Activated CD4-positive, alpha-beta T cell treated with anti-CD3 and anti-CD28 coated beads for 36 hours (primary cell): ENCODE measurements at regions of chr1 and their contacts with region 1.

Region 1: GRCh38 chr1:207389740-207390464 is 64.2 kb upstream of the CR2 start:
- DNase-seq: peak; percentile 29
- ATAC-seq: peak; percentile 98
- H3K4me3 Mint-ChIP-seq: no peak overlapping the region
- H3K27ac Mint-ChIP-seq: peak overlapping the region; percentile 83
- H3K4me1 Mint-ChIP-seq: peaks cover 19% of the 10 kb centered on the region
- H3K27me3 Mint-ChIP-seq: no peaks in the 10 kb centered on the region

Region 2: DNA sequence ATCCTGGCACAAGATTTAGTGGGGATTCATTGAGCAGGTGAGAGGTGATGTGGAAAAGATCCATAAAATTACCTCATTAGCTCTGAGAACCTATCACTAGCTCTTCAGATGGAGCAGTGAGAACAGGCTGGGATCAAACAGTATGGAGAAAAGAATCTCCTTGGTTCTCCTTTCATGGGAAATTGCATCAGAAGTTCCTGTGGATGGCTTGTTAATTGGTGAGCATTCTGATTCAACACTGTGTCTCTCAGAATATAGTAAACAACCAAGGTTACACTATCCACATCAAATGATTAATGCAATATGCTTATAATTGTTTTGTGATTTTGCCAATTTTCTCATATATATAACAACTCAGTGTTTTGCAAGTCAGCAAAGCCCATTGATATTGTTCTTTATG is 76.8 kb before region 1 on chr1:
- CTCF ChIA-PET with region 1: no interaction called
- POLR2A ChIA-PET with region 1: no interaction called
- intact Hi-C with region 1: no loop called
- DNase-seq: no peak
- ATAC-seq: no peak
- H3K4me3 Mint-ChIP-seq: no peak overlapping the region
- H3K27ac Mint-ChIP-seq: no peak overlapping the region
- H3K4me1 Mint-ChIP-seq: peaks cover 20% of the 10 kb centered on the region
- H3K27me3 Mint-ChIP-seq: no peaks in the 10 kb centered on the region

Region 3: DNA sequence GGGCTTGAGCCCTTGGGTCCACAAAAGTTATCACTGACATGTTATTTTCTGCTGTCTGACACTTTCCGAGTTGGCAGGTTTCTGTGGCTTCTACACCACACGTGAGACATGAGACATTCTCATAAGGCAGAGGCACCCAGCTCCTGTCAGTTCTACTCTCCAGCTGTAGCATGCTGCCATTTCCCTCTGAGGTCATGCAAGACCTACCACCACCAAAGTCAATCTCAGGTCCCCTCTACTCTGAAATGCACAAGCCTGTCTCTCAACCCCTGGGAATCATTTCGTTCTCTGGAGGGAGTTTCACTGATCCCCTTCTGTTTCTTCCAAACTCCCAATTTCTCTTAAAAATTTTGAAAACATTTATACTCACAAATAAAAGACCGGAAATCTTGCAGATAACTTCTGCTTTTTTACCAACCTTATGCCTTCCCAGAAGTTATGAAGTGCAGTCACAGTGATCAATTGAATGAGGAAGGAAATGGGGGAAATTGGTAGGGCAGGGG is 24.8 kb after region 1 on chr1:
- CTCF ChIA-PET with region 1: no interaction called
- POLR2A ChIA-PET with region 1: interaction called, 5 read pairs
- intact Hi-C with region 1: loop called in 1 of 2 experiments (anchors 1 kb)
- DNase-seq: peak; percentile 75
- ATAC-seq: peak; percentile 74
- H3K4me3 Mint-ChIP-seq: no peak overlapping the region
- H3K27ac Mint-ChIP-seq: peak overlapping the region; percentile 10
- H3K4me1 Mint-ChIP-seq: peaks cover 37% of the 10 kb centered on the region
- H3K27me3 Mint-ChIP-seq: peaks cover 4% of the 10 kb centered on the region